ENCODE measurements at regions of chr2 and their contacts with region 1.

Region 1: DNA sequence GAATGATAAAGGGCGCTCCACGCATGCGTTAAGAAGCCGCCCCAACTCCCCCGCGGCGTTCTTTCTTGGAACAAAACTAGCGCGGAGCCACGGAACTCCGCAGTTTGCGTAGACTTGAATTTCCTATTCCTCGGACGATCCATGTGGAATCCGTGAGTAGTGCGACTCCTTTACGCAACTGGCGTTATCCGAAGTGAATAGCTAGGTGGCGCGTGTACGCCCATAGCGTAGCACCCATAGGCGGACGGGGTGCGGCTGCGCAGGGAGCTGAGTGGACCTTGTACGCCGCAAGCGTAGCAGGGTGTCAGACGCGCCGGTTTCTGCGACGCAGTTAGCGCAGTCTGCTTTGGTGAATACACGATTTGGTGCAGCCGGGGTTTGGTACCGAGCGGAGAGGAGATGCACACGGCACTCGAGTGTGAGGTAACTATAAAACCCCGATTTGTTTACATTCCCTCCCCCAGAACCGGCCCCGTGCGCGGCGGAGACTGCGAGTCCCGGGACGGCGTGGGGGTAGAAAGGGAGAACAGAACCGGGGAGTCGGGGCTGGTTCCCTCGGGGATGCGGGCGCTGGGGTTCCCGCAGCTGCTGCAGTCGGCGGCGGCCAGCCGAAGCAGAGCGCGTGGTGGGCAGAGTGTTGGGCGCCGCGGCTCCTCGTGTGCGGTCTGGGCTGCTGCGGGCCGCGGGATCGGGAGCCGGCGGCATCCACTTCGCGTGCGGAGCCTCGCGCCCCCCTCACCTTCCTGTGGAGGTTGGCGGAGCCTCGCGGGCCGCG is at the start of gene SLC39A10:
- DNase-seq: peak; percentile 93 to 100 (median 98)
- ATAC-seq: peak; percentile 78
- H3K4me3 ChIP-seq: peak within 1 kb of the TSS; percentile 94
- H3K4me3 Mint-ChIP-seq: peak within 1 kb of the TSS; percentile 99
- H3K27ac ChIP-seq: peak within 1 kb of the TSS; percentile 97 to 99
- H3K27ac Mint-ChIP-seq: peak within 1 kb of the TSS; percentile 98
- H3K4me1 ChIP-seq: peaks cover 10% of the 10 kb centered on the region
- H3K4me1 Mint-ChIP-seq: peaks cover 35% of the 10 kb centered on the region
- H3K27me3 ChIP-seq: no peaks in the 10 kb centered on the region
- H3K27me3 Mint-ChIP-seq: peaks cover 4% of the 10 kb centered on the region
- CTCF ChIP-seq: no peak
- total RNA-seq, gene SLC39A10: 38.2 to 39.4 TPM

Region 2: GRCh38 chr2:195407782-195408181 is 249.3 kb before region 1 on chr2:
- CTCF ChIA-PET with region 1: interaction called, 6 read pairs
- POLR2A ChIA-PET with region 1: no interaction called
- intact Hi-C with region 1: loop called (anchors 5 to 10 kb)
- DNase-seq: no peak
- ATAC-seq: no peak
- H3K4me3 ChIP-seq: no peak overlapping the region
- H3K4me3 Mint-ChIP-seq: no peak overlapping the region
- H3K27ac ChIP-seq: no peak overlapping the region
- H3K27ac Mint-ChIP-seq: no peak overlapping the region
- H3K4me1 ChIP-seq: no peaks in the 10 kb centered on the region
- H3K4me1 Mint-ChIP-seq: no peaks in the 10 kb centered on the region
- H3K27me3 ChIP-seq: no peaks in the 10 kb centered on the region
- H3K27me3 Mint-ChIP-seq: no peaks in the 10 kb centered on the region
- CTCF ChIP-seq: no peak

Region 3: DNA sequence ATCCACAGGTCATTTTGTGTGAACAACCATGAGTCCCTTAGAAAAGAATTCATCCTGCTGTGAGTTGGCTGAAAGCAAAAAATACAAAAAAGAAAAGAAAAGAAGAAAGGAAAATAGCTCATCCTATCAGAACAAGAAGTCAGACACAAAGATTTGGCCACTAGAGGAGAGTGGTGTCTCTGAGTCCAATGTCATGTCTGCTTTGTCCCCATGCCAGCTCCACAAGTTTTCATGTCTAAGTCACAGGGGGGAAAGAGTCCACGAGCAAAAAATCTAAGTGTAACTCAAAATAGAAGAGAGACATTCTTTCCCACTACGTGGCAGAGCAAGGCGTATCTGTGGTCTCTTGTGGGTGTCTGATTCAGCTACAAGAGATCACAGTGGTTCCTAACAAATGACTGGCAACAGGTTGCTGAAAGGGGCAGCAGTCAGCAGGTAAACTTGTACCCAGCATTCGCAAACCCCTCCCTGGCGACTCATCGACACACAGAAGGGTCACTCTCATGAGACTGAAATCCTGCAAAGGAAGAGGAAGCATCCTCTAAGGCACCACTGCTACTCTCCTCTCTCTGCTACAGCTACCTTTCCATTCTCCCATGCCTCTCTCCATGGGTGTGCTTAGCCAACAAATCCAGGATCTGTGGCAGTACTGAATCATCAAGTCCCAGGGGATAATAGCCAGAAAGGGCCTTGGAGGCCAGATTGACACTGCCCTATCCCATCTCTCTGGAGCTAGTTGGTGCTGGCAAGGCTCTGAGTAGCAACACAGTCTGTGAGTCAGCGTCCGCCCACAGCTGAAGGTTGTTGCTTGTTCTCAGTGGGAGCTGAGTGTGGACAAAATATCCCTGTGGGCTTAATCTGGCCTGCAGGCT is 123.0 kb before region 1 on chr2:
- CTCF ChIA-PET with region 1: interaction called, 28 read pairs
- POLR2A ChIA-PET with region 1: interaction called, 225 read pairs
- intact Hi-C with region 1: loop called in 1 of 2 experiments (anchors 1 kb)
- DNase-seq: peak in 13 of 14 experiments; percentile 36 to 78 (median 55)
- ATAC-seq: peak; percentile 72
- H3K4me3 ChIP-seq: peak overlapping the region; percentile 54
- H3K4me3 Mint-ChIP-seq: peak overlapping the region; percentile 90
- H3K27ac ChIP-seq: peak overlapping the region; percentile 52 to 79
- H3K27ac Mint-ChIP-seq: peak overlapping the region; percentile 100
- H3K4me1 ChIP-seq: peaks cover 52% of the 10 kb centered on the region
- H3K4me1 Mint-ChIP-seq: peaks cover 86% of the 10 kb centered on the region
- H3K27me3 ChIP-seq: no peaks in the 10 kb centered on the region
- H3K27me3 Mint-ChIP-seq: no peaks in the 10 kb centered on the region
- CTCF ChIP-seq: no peak

Region 4: DNA sequence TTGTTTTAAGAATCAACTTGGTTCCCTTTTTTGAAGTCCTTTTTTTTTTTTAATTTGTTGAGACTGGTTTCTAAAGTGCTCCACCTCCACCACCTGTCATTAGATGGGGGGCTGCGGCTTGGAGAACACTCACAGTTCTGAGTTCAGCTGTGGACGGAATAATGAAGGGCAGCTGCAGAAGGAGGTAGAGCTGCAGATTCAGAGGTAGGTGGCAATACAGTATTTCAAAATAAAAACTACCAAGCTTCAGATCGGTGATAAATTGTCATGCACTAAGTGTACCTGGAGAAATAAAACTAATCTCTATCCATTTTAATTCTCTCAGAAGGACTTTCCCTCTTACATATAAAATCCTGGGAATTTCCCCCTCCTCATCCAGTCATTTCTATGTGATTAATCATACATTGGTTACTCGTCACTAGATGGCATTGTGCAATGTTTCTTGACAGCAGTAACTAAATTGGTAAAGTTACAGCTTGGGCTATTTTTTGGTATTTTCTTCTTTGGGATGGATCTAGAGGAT is 81.1 kb before region 1 on chr2:
- CTCF ChIA-PET with region 1: interaction called, 22 read pairs
- POLR2A ChIA-PET with region 1: interaction called, 45 read pairs
- intact Hi-C with region 1: loop called (anchors 2 to 5 kb)
- DNase-seq: peak in 3 of 14 experiments; percentile 45 to 68 (median 67)
- ATAC-seq: no peak
- H3K4me3 ChIP-seq: no peak overlapping the region
- H3K4me3 Mint-ChIP-seq: peak overlapping the region; percentile 42
- H3K27ac ChIP-seq: no peak overlapping the region
- H3K27ac Mint-ChIP-seq: peak overlapping the region; percentile 76
- H3K4me1 ChIP-seq: peaks cover 25% of the 10 kb centered on the region
- H3K4me1 Mint-ChIP-seq: peaks cover 74% of the 10 kb centered on the region
- H3K27me3 ChIP-seq: no peaks in the 10 kb centered on the region
- H3K27me3 Mint-ChIP-seq: no peaks in the 10 kb centered on the region
- CTCF ChIP-seq: no peak

Region 5: GRCh38 chr2:196225213-196225612 is 568.2 kb after region 1 on chr2:
- CTCF ChIA-PET with region 1: no interaction called
- POLR2A ChIA-PET with region 1: no interaction called
- intact Hi-C with region 1: loop called in 1 of 2 experiments (anchors 5 kb)
- DNase-seq: no peak
- ATAC-seq: no peak
- H3K4me3 ChIP-seq: no peak overlapping the region
- H3K4me3 Mint-ChIP-seq: peak overlapping the region; percentile 7
- H3K27ac ChIP-seq: no peak overlapping the region
- H3K27ac Mint-ChIP-seq: peak overlapping the region; percentile 46
- H3K4me1 ChIP-seq: peaks cover 30% of the 10 kb centered on the region
- H3K4me1 Mint-ChIP-seq: peaks cover 89% of the 10 kb centered on the region
- H3K27me3 ChIP-seq: no peaks in the 10 kb centered on the region
- H3K27me3 Mint-ChIP-seq: no peaks in the 10 kb centered on the region
- CTCF ChIP-seq: no peak